ENCODE measurements at regions of chr18 and their contacts with region 1.

Region 1: DNA sequence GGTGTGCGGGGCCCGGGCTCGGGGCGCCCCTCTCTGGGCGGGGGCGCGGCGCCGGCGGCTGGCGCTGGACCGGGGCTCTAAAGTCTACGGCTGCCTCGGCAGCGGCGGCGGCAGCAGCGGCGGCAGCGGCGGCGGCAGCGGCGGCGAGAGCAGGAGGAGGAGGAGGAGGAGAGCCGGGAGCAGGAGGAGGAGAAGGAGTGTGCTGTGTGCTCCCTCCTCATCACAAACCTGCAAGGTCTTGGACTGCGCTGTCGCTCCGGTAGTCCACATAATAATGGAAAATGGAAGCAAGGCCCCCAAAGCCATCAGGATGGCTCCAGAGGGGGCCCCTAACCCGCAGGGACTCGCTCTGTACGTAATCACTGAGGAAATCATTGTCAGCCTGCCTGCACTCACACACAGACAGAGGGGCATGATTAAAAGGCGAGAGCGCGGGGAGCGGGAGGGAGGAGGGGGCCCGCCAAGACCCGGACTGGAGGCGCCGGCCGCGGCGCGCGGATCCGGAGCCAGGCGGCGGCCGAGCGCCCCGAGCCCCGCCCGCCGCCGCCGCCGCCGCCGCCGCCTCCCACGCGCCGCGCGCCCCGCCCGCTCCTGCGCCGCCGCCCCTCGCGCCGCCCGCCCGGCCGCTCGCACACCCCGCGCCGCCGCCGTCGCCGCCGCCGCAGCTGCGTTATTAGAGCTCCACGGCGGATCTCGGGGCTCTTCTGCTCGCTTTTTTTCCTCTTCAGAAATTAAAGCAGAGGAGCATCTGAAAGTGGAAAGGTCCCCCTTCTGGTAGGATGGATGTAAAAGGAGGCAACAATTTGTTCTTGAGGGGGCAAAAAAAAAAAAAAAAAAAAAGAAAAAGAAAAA is at the start of gene ZNF521:
- DNase-seq: peak; percentile 70 to 97 (median 82)

Region 2: GRCh38 chr18:24878289-24878688 is 473.7 kb before region 1 on chr18:
- intact Hi-C with region 1: loop called (anchors 10 kb)
- DNase-seq: no peak

Region 3: DNA sequence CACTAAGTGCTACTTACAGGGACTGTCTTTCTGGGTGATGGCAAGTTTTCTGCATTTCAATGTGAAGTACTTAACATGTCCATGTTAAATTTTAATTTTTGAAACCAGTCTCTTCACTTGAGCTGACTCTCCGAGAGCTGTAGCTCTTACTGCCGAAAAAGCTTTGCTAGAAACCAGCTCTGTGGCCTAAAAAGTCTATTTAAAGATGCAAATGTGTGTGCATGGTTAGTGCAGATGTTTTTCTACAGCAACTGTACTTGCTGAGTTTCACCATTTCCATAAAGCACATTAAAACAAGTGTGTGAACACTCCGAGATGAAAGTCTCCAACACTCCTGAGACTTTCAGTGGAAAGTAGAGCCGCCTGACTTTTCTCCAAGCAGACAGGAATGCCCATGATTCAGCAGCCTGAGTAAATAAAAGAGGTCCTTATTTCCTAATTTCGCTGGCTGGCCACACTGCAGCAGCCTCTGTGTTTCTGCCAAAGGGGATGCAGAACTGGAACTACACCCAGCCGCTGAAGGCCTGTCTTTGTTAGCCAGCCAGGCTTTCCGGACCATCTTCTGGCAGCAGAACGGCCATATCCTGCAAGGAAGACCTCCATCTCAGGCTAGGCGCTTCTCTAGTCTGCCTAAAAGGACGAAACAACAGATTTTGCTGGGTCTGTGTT is 121.2 kb before region 1 on chr18:
- intact Hi-C with region 1: loop called (anchors 2 kb)
- DNase-seq: peak; percentile 59 to 94 (median 72)

Region 4: DNA sequence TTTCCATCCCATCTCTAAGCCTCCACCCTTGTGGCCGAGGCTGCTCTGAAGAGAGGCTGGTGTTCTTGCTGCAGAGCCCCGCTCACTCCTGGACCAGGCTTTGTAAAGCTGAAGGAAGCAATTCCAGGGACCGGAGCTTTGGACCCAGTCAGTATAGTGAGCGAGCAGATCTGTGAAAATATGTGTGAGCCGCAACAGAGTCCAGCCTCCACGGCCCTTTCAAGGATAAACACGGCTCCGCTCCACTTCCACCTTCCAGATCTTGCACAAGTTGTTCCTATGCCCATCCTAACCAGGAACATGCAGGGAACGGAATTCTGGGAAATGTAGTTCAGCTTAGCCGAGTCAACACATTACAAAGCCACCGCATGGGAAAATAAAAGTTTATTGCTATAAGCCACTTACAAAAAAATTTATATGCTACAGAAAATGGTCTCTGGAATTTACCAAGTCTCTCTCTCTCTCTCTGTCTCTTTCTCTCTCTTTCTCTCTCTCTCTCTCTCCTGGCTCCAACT is 151.6 kb after region 1 on chr18:
- intact Hi-C with region 1: loop called (anchors 10 kb)
- DNase-seq: peak; percentile 18 to 91 (median 52)

Region 5: GRCh38 chr18:26090130-26091046 is 738.4 kb after region 1 on chr18 and contains the start of gene SS18:
- intact Hi-C with region 1: loop called (anchors 5 kb)
- DNase-seq: peak; percentile 83 to 98 (median 90)

Measured in posterior cingulate gyrus (tissue), 11 donors.